Mammary epithelial cell (primary cell): ENCODE measurements at regions of chr10 and their contacts with region 1.

Region 1: DNA sequence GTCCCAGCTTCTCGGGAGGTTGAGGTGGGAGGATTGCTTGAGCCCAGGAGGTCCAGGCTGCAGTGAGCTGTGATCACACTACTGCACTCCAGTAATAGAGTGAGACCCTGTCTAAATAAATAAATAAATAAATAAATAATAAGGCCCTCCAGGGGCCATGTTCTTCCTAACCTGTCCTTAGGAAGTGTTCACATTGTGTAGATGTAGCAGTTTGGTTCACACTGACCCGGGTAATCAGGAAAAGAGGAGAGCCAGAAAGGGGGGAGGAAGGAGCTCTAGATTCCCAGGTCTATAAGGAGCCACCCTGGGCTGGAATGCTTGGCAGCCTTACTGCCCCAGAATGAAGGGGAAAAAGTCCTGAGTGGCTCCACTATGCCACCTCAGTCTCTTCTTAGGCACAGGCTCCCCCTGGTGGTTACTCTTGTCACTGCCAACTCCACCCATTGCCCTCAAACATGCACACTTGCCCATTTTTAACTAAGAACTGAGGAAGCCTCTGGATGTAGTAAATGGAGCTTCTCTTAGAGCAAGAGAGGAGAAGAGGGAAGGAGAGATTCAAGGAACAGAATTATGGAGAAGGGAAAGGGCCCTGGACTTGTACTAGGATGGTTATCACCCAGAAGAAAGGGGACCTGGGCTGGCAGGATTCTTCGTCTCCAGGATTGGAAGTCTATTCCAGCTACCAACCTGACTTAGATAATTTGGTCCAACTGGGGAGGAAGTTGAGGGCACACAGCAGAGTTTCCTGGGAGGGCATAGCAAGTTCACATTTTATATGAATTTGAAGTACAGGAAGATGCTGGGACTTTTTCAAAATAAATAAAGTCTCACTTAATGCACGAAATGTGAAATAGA is 7.8 kb downstream of the HPS6 start:
- DNase-seq: peak; percentile 52
- H3K4me3 ChIP-seq: no peak overlapping the region
- H3K27ac ChIP-seq: no peak overlapping the region
- H3K4me1 ChIP-seq: no peaks in the 10 kb centered on the region
- H3K27me3 ChIP-seq: no peaks in the 10 kb centered on the region
- CTCF ChIP-seq: peak; percentile 95 to 99

Region 2: DNA sequence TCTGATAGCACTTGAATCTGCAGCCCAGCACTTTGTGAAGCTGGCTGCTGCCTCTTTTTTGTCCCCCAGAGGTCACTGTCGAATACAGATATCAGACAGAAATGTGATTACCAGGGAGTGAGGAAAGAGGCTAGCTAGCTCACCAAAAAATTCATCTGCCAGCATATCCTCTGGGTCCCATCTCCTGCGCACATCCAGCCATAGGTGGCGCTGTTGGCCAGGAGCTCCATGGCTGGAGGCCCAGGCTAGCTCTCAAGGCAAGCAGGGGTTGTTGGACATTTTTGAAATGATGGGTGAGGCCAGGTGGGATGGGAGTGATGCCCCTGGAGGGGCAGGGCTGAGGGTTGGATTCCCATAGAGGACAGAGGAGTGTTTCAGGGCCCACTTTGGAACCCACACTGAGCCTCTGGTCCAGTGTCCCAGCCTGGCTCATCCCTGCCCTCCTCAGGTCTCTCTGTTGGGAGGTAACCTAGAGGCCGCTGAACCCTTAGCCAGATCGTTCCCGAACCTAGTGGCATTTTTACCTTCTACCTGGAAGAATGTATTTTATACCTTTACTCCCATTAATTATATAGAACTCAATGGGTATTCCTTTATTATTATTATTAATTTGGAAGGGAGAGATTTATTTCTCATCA is 470.0 kb before region 1 on chr10:
- CTCF ChIA-PET with region 1: no interaction called
- dilution Hi-C with region 1: no loop called
- in situ Hi-C with region 1: no loop called
- intact Hi-C with region 1: loop called (anchors 1 kb)
- DNase-seq: peak; percentile 62
- H3K4me3 ChIP-seq: no peak overlapping the region
- H3K27ac ChIP-seq: no peak overlapping the region
- H3K4me1 ChIP-seq: no peaks in the 10 kb centered on the region
- H3K27me3 ChIP-seq: no peaks in the 10 kb centered on the region
- CTCF ChIP-seq: peak; percentile 98

Region 3: DNA sequence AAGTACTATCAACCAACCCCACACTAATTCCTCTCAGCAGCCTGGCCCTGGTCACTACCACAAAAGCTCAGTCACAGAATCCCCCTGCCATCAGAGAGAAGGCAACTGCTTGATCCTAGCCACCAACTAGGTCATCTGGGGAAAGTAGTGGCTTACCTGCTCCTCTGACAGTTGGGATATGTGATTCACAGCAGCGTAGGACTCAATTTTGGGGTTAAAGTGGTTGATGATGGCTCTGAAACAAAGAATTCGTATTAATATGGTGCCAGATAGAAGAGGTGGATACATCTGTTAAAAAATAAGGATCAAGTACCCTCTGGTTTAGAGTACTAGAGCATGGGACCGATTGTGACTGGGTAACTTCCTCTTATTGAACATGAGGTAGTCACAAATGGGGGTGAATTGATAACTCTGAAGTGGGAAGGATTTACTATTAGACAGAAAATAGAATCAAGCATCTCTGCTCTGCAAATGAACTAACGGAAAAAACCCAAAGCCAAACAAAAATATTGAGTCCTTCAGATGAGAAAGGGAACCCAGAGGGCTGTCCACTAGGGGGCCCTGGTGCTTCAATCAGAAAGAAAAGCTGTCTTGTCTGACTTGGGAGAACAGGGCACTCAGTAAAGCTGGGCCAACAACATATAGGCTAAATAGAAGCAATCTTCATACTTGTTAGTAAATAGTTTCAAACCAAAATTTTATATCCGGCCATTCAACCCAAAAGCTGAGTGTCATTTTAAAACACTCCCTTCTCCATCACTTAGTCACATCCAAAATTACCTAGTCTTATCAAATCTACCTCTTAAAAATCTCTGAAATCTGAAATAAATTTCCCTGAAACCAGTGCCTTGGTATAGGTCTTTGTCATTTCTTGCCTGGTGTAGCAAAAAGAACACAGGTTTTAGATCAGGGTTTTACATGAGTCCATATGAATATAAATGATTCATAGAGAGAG is 183.4 kb before region 1 on chr10:
- CTCF ChIA-PET with region 1: no interaction called
- dilution Hi-C with region 1: no loop called
- in situ Hi-C with region 1: no loop called
- intact Hi-C with region 1: loop called (anchors 1 kb)
- DNase-seq: peak; percentile 40
- H3K4me3 ChIP-seq: no peak overlapping the region
- H3K27ac ChIP-seq: no peak overlapping the region
- H3K4me1 ChIP-seq: no peaks in the 10 kb centered on the region
- H3K27me3 ChIP-seq: no peaks in the 10 kb centered on the region
- CTCF ChIP-seq: peak; percentile 89 to 91